AG04449 (cell line): ENCODE measurements at regions of chr2 and their contacts with region 1.

Region 1: DNA sequence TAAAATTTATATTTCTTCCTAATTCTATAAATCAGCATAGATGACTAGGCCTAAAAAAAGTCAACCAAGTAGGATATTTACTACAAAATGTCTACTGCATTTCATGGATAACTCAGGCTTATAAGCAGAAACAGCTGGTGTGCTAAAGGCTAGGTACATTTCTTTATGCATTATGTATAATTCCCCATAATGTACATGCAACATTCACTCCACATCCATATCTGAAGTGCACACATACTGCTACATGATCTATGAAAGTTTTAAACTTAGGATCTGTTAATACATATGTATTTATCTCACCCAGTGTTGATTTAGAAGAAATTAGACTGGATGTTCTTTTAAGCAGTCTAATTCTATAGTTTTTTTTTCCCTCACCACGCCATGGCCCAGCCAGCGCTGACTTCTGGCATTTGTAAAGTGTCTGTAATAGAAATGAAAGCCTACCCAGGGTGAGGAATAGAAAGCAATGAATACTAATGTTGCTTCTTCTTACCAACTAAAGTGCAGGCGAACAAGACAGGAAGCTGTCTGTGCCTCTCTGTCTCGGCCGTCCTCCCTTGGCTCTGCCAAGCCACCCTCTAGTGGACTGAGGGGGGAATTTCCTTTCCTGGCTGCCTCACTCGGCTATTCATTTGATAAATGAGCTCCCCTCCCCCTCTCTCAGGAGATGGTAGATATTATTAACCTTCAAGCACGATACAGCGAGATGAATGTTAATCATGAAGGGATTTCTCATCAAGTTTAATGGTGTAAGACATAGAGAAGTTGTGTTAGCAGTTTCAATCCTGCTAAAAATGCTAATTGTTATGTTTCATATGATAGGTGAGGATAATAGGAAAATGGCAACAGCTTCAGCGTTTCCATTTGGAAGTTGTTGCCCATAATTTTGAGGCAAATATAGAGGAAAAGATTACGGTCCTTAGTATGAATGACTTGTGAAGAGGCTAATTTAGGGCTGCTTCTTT is 384.5 kb downstream of the MTX2 start:
- DNase-seq: no peak
- H3K4me3 ChIP-seq: no peak overlapping the region
- CTCF ChIP-seq: peak; percentile 86

Region 2: GRCh38 chr2:176118601-176119339 is 535.0 kb before region 1 on chr2:
- CTCF ChIA-PET with region 1: interaction called, 1,421 read pairs
- POLR2A ChIA-PET with region 1: no interaction called
- DNase-seq: no peak
- H3K4me3 ChIP-seq: no peak overlapping the region
- CTCF ChIP-seq: peak; percentile 23

Region 3: DNA sequence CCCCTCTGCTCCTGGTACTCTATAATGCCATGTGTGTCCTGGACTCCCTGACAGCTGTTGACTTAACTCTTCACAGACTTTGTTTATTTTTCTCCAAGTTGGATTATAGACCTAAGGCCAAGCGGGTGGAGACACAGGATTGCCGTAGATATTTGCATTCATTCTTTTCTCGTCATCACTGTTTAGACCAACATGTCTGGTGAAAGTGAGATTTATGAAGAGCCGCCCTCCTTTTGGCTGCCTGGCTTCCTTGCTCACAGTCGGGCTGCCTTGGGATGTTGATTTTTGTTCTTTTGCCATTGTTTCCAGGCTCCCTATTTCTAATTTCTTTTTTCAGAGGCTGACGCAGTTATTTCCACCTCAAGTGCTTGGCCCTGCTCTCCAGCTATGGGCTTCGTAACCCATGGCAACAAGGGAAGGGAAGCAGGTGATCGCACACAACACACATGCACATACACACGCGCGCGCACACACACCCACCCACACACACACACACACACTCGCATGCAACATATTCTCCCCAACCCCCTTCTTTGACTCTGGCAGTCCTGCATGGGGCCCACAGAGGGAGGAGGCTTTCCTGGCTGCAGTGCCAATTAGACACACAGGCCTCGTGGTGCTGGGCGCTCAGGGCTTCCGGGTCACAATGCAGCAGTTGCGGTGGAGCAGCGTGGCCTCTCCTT is 88.0 kb before region 1 on chr2:
- CTCF ChIA-PET with region 1: interaction called, 39 read pairs
- POLR2A ChIA-PET with region 1: no interaction called
- DNase-seq: no peak
- H3K4me3 ChIP-seq: no peak overlapping the region
- CTCF ChIP-seq: no peak

Region 4: DNA sequence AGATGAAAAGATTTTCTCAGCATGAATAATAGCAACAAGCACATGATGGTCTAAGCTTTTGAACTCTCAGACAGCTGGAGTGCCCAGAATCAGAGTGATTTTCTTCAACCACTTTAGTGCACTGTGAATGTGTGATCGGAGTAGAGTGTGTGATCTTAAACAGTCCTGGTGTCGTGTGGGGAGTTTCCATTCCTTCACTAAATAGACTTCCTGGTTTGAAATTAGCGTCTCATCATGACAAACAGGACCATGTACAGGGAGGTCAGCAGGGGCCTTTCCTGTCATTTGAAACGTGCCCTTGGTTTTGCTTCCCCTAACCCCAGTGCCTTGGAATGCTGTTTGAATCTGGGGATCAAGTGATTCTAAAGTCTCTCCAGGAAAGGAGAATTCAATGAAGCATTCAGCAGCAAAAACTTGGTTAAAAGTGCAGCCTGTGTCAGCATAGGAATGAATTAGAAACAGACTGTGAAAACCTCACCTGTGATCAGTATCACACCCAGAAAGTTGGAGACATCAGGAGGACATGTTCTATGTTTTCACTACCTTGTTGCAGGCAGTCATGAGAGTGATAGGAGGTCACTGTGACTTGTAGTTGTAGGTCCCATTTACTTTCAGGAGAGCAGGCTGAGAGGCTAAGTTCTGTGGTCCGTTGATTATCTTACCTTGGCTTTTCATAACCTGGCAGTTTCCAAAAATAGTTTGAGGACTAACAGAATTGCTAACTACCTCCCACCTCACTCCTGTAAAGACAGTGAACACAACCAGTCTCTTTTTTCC is 15.8 kb after region 1 on chr2:
- CTCF ChIA-PET with region 1: interaction called, 177 read pairs
- POLR2A ChIA-PET with region 1: no interaction called
- DNase-seq: no peak
- H3K4me3 ChIP-seq: no peak overlapping the region
- CTCF ChIP-seq: no peak

Region 5: DNA sequence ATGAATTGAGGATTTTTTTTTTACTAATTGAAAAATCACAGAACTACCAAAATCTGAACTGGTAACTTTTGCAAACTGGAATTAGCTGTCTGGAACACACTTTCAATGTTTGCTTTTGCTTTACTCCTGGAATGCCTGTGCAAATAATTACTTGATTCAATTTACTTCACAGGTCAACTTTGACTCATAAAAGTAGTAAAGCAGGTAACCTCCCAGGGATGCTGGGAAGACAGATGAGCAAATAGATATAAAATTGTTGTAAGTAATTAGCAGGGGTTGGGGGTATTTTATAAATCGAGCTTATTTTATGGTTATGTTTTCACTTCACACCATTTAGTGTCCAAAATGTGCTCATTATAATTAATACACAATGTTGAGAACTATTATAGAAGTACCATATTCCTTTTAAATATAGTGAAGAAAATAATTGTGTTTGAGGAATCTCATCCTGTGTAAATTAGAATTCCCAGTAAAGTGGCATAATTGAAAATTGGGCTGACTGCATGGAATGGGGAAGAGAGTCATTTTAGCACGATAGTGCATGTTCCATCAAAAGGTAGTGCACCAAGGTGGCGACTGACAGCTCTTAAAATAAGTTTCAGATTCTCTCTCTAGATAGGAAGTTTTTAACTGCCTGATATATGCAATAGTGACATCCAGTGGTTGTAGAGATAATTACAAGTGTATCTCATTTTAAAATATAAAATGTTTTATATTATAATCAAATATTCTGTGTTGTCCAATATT is 160.7 kb after region 1 on chr2:
- CTCF ChIA-PET with region 1: interaction called, 29 read pairs
- POLR2A ChIA-PET with region 1: no interaction called
- DNase-seq: no peak
- H3K4me3 ChIP-seq: no peak overlapping the region
- CTCF ChIP-seq: peak; percentile 12